ENCODE measurements at regions of chr13 and their contacts with region 1.

Region 1: GRCh38 chr13:49300739-49301589 is 53.2 kb downstream of the CDADC1 start:
- DNase-seq: peak; percentile 42
- ATAC-seq: peak; percentile 96
- H3K4me3 ChIP-seq: no peak overlapping the region
- H3K27ac ChIP-seq: no peak overlapping the region
- H3K4me1 ChIP-seq: peaks cover 3% of the 10 kb centered on the region; the same call in 1 of the 2 replicates
- H3K27me3 ChIP-seq: no peaks in the 10 kb centered on the region
- CTCF ChIP-seq: peak; percentile 90 to 95 (median 94); a peak in 5 of 6 replicates
- EP300 ChIP-seq: no peak
- POLR2A ChIP-seq: peak; percentile 45; the same call in 1 of the 2 replicates
- RAD21 ChIP-seq: peak; percentile 99

Region 2: GRCh38 chr13:49421391-49421790 is 120.4 kb after region 1 on chr13:
- CTCF ChIA-PET with region 1: no interaction called
- POLR2A ChIA-PET with region 1: no interaction called
- RAD21 ChIA-PET with region 1: no interaction called
- SMC1A ChIA-PET with region 1: no interaction called
- in situ Hi-C with region 1: no loop called
- intact Hi-C with region 1: loop called (anchors 5 kb)
- DNase-seq: peak; percentile 24
- ATAC-seq: peak; percentile 99
- H3K4me3 ChIP-seq: no peak overlapping the region
- H3K27ac ChIP-seq: no peak overlapping the region
- H3K4me1 ChIP-seq: no peaks in the 10 kb centered on the region
- H3K27me3 ChIP-seq: no peaks in the 10 kb centered on the region
- CTCF ChIP-seq: peak; percentile 50 to 68 (median 67)
- EP300 ChIP-seq: no peak
- POLR2A ChIP-seq: no peak
- RAD21 ChIP-seq: peak; percentile 77

Region 3: DNA sequence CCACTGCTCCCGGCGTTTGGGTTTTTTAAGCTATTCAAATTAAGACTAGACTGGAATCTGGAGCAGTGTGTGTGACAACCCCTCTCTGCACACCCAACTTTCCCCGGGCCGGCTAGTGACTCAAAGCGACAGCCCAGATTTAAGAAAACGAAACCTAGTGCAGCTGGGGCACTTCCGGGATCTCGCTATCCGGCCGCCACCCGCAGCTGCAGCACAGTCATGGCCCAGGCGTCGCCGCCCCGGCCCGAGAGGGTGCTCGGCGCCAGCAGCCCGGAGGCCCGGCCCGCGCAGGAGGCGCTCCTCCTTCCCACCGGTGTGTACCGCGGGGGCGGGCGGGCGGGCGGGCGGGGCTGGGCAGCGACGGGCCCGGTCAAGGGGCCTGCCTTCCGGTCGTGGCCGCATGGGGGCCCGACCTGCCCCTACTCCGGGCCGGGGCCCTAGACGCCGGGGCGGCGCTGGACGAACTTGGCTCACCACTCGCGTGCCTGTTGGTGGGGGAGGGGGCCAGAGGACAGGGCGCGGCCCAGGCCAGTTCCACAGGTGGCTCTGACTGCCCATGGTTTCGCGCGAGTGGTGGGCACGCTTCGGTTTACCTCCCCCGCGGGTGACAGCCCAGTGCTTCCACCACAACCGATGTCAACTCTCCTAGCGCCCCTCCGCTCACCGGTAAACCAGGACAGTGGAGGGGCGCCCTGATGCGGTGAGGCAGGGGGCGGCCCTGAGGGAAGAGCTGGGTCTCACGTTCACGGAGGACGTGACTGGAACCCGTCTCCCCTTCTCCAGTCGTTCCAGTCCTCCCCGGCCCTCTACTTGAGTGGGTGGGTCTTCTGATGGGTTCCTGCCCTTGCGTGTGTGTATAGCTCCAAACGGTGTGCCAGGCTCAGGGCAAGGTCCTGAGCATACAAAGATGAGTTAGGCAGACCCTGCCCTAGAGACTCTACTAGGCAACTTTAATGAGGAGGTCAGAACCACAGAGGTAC is 195.1 kb after region 1 on chr13 and contains the start of gene PHF11:
- CTCF ChIA-PET with region 1: no interaction called
- POLR2A ChIA-PET with region 1: no interaction called
- RAD21 ChIA-PET with region 1: no interaction called
- SMC1A ChIA-PET with region 1: no interaction called
- in situ Hi-C with region 1: no loop called
- intact Hi-C with region 1: loop called (anchors 10 kb)
- DNase-seq: peak; percentile 65
- ATAC-seq: peak; percentile 86
- H3K4me3 ChIP-seq: peak within 1 kb of the TSS; percentile 78
- H3K27ac ChIP-seq: peak within 1 kb of the TSS; percentile 94
- H3K4me1 ChIP-seq: peaks cover 6% of the 10 kb centered on the region
- H3K27me3 ChIP-seq: no peaks in the 10 kb centered on the region
- CTCF ChIP-seq: no peak
- EP300 ChIP-seq: no peak
- POLR2A ChIP-seq: peak; percentile 88
- RAD21 ChIP-seq: no peak
- polyA plus RNA-seq, gene PHF11: 16.9 to 23.0 TPM